ENCODE measurements at regions of chr2 and their contacts with region 1.

Region 1: GRCh38 chr2:70686577-70687460 is 81.2 kb downstream of the ADD2 start:
- DNase-seq: peak; percentile 51 to 82
- H3K4me3 ChIP-seq: no peak overlapping the region
- H3K27ac ChIP-seq: peak overlapping the region; percentile 51; the same call in 1 of the 2 replicates
- H3K4me1 ChIP-seq: peaks cover 0 to 9% (median 2%) of the 10 kb centered on the region in 4 experiments; a peak in 5 of 7 replicates
- H3K27me3 ChIP-seq: no peaks in the 10 kb centered on the region
- CTCF ChIP-seq: peak; percentile 86 to 91 (median 90)
- EP300 ChIP-seq: no peak
- POLR2A ChIP-seq: no peak
- RAD21 ChIP-seq: peak; percentile 75 to 84

Region 2: DNA sequence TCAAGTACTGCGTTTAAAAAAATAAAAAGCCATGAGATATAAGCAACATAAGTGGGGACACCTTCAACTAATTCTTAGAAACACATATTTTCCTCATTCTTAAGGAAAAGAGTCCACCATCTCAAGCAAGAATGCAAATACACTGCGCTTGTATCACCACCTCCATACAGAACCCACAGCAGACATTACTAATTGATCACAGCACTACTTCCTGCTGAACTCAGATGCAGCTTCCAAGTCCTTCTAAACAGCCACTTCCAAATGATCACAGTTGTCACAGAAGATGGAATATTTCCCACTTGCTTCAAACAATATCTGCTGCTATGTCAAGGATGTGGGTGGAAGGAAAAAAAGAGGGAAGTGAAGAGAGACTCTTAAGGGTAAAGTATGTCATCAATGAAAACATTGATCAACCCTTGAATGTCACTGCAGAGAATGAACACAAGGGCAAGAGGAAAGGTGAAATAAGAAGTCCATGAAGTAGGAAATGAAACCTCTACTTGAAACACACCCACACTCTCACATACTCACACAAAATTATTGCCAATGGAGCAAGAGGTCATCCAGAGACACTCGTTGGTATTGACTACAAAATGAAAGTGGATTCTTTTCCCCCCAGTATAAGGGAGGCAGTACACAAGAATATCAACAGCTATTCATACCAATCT is 155.3 kb before region 1 on chr2:
- CTCF ChIA-PET with region 1: no interaction called
- POLR2A ChIA-PET with region 1: no interaction called
- DNase-seq: no peak
- H3K4me3 ChIP-seq: no peak overlapping the region
- H3K27ac ChIP-seq: no peak overlapping the region
- H3K4me1 ChIP-seq: no peaks in the 10 kb centered on the region
- H3K27me3 ChIP-seq: no peaks in the 10 kb centered on the region
- CTCF ChIP-seq: no peak
- EP300 ChIP-seq: no peak
- POLR2A ChIP-seq: no peak
- RAD21 ChIP-seq: no peak

Region 3: GRCh38 chr2:70560040-70560439 is 126.8 kb before region 1 on chr2:
- CTCF ChIA-PET with region 1: no interaction called
- POLR2A ChIA-PET with region 1: no interaction called
- DNase-seq: no peak
- H3K4me3 ChIP-seq: no peak overlapping the region
- H3K27ac ChIP-seq: no peak overlapping the region
- H3K4me1 ChIP-seq: no peaks in the 10 kb centered on the region
- H3K27me3 ChIP-seq: peaks cover 0 to 4% (median 2%) of the 10 kb centered on the region in 4 experiments; a peak in 2 of 7 replicates
- CTCF ChIP-seq: no peak
- EP300 ChIP-seq: no peak
- POLR2A ChIP-seq: no peak
- RAD21 ChIP-seq: no peak

Region 4: GRCh38 chr2:70656421-70657010 is 30.3 kb before region 1 on chr2:
- CTCF ChIA-PET with region 1: interaction called, 14 read pairs
- POLR2A ChIA-PET with region 1: interaction called, 3 read pairs
- DNase-seq: peak in 1 of 2 experiments; percentile 43
- H3K4me3 ChIP-seq: no peak overlapping the region
- H3K27ac ChIP-seq: no peak overlapping the region
- H3K4me1 ChIP-seq: peaks cover 0 to 5% (median 0%) of the 10 kb centered on the region in 4 experiments; a peak in 2 of 7 replicates
- H3K27me3 ChIP-seq: peaks cover 2 to 7% (median 3%) of the 10 kb centered on the region in 4 experiments; a peak in 5 of 7 replicates
- CTCF ChIP-seq: no peak
- EP300 ChIP-seq: no peak
- POLR2A ChIP-seq: peak in 1 of 2 experiments; percentile 8; a peak in 1 of 3 replicates
- RAD21 ChIP-seq: no peak

Region 5: GRCh38 chr2:70697603-70698383 is 11.0 kb after region 1 on chr2:
- CTCF ChIA-PET with region 1: interaction called, 21 read pairs
- POLR2A ChIA-PET with region 1: no interaction called
- DNase-seq: no peak
- H3K4me3 ChIP-seq: no peak overlapping the region
- H3K27ac ChIP-seq: no peak overlapping the region
- H3K4me1 ChIP-seq: no peaks in the 10 kb centered on the region
- H3K27me3 ChIP-seq: no peaks in the 10 kb centered on the region
- CTCF ChIP-seq: no peak
- EP300 ChIP-seq: no peak
- POLR2A ChIP-seq: no peak
- RAD21 ChIP-seq: no peak

Region 6: GRCh38 chr2:70748002-70748784 is 61.4 kb after region 1 on chr2:
- CTCF ChIA-PET with region 1: interaction called, 11 read pairs
- POLR2A ChIA-PET with region 1: no interaction called
- DNase-seq: peak in 1 of 2 experiments; percentile 38
- H3K4me3 ChIP-seq: no peak overlapping the region
- H3K27ac ChIP-seq: no peak overlapping the region
- H3K4me1 ChIP-seq: peaks cover 1 to 19% (median 9%) of the 10 kb centered on the region in 4 experiments; a peak in 4 of 7 replicates
- H3K27me3 ChIP-seq: no peaks in the 10 kb centered on the region
- CTCF ChIP-seq: peak in 2 of 3 experiments; percentile 18 to 51; a peak in 2 of 4 replicates
- EP300 ChIP-seq: no peak
- POLR2A ChIP-seq: no peak
- RAD21 ChIP-seq: peak in 1 of 2 experiments; percentile 38; a peak in 2 of 4 replicates

Region 7: GRCh38 chr2:70779911-70780545 is 93.2 kb after region 1 on chr2:
- CTCF ChIA-PET with region 1: interaction called, 117 read pairs
- POLR2A ChIA-PET with region 1: no interaction called
- DNase-seq: no peak
- H3K4me3 ChIP-seq: no peak overlapping the region
- H3K27ac ChIP-seq: no peak overlapping the region
- H3K4me1 ChIP-seq: no peaks in the 10 kb centered on the region
- H3K27me3 ChIP-seq: no peaks in the 10 kb centered on the region; a peak in 3 of 7 replicates
- CTCF ChIP-seq: no peak
- EP300 ChIP-seq: no peak
- POLR2A ChIP-seq: no peak
- RAD21 ChIP-seq: no peak